ENCODE measurements at regions of chr7 and their contacts with region 1.

Region 1: GRCh38 chr7:30433082-30433481 is 45.5 kb downstream of the NOD1 start:
- DNase-seq: no peak
- H3K4me3 ChIP-seq: no peak overlapping the region
- H3K27ac ChIP-seq: peak overlapping the region; percentile 48 to 87 (median 73)
- H3K4me1 ChIP-seq: peaks cover 38 to 79% (median 72%) of the 10 kb centered on the region in 4 donors
- H3K27me3 ChIP-seq: no peaks in the 10 kb centered on the region
- CTCF ChIP-seq: no peak
- EP300 ChIP-seq: no peak
- POLR2A ChIP-seq: no peak

Region 2: GRCh38 chr7:30164567-30164966 is 268.5 kb before region 1 on chr7:
- intact Hi-C with region 1: no loop called
- DNase-seq: no peak
- H3K4me3 ChIP-seq: no peak overlapping the region
- H3K27ac ChIP-seq: peak overlapping the region in 3 of 4 donors; percentile 34 to 65 (median 59)
- H3K4me1 ChIP-seq: peaks cover 19 to 64% (median 47%) of the 10 kb centered on the region in 4 donors
- H3K27me3 ChIP-seq: no peaks in the 10 kb centered on the region
- CTCF ChIP-seq: peak; percentile 59 to 69 (median 67)
- EP300 ChIP-seq: no peak
- POLR2A ChIP-seq: no peak

Region 3: GRCh38 chr7:30412810-30413504 is 20.1 kb before region 1 on chr7:
- intact Hi-C with region 1: no loop called
- DNase-seq: peak; percentile 91
- H3K4me3 ChIP-seq: no peak overlapping the region
- H3K27ac ChIP-seq: no peak overlapping the region
- H3K4me1 ChIP-seq: peaks cover 0 to 19% (median 8%) of the 10 kb centered on the region in 4 donors
- H3K27me3 ChIP-seq: no peaks in the 10 kb centered on the region
- CTCF ChIP-seq: peak; percentile 63 to 83 (median 66)
- EP300 ChIP-seq: no peak
- POLR2A ChIP-seq: no peak

Region 4: GRCh38 chr7:30469303-30469702 is 36.2 kb after region 1 on chr7:
- intact Hi-C with region 1: loop called (anchors 5 kb)
- DNase-seq: peak; percentile 97
- H3K4me3 ChIP-seq: peak overlapping the region; percentile 3 to 32 (median 15)
- H3K27ac ChIP-seq: peak overlapping the region; percentile 84 to 87 (median 85)
- H3K4me1 ChIP-seq: peaks cover 94 to 100% (median 98%) of the 10 kb centered on the region in 4 donors
- H3K27me3 ChIP-seq: no peaks in the 10 kb centered on the region
- CTCF ChIP-seq: peak; percentile 41 to 59 (median 49)
- EP300 ChIP-seq: peak; percentile 95
- POLR2A ChIP-seq: peak; percentile 32

Region 5: GRCh38 chr7:30493228-30493627 is 60.1 kb after region 1 on chr7:
- intact Hi-C with region 1: no loop called
- DNase-seq: no peak
- H3K4me3 ChIP-seq: no peak overlapping the region
- H3K27ac ChIP-seq: no peak overlapping the region
- H3K4me1 ChIP-seq: no peaks in the 10 kb centered on the region
- H3K27me3 ChIP-seq: no peaks in the 10 kb centered on the region
- CTCF ChIP-seq: no peak
- EP300 ChIP-seq: no peak
- POLR2A ChIP-seq: no peak